HEK293 (cell line): ENCODE measurements at regions of chr9 and their contacts with region 1.

Region 1: DNA sequence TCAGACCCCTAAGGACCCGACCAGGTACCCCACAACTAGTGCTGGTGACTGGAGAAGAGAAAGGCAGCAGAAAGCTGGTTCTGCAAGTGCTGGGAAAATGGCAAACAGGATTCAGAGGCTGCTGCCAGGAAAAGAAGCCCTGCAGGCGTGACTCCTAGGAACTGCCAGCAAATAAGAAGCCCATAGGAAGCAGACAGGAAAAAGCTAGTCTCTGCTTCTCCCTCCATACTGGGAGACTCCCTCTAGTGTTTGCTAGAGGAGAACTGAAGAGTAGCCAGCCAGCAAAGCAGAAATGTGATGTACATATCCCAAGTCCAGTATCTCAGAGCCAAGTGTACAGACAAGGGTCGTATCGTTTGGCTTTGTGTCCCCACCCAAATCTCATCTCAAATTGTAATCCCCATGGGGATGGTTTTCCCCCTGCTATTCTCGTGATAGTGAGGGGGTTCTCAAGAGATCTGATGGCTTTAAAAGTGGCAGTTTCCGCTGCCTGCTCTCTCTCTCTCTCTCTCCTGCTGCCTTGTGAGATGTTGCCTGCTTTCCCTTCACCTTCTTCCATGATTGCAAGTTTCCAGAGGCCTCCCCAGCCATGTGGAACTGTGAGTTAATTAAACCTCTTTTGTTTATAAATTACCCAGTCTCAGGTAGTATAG is 38.1 kb upstream of the TUSC1 start:
- H3K4me3 ChIP-seq: no peak overlapping the region
- H3K27ac ChIP-seq: no peak overlapping the region
- H3K4me1 ChIP-seq: no peaks in the 10 kb centered on the region
- CTCF ChIP-seq: no peak

Region 2: GRCh38 chr9:25513509-25514033 is 202.8 kb before region 1 on chr9:
- CTCF ChIA-PET with region 1: no interaction called
- POLR2A ChIA-PET with region 1: no interaction called
- H3K4me3 ChIP-seq: no peak overlapping the region
- H3K27ac ChIP-seq: no peak overlapping the region
- H3K4me1 ChIP-seq: no peaks in the 10 kb centered on the region
- CTCF ChIP-seq: no peak

Region 3: GRCh38 chr9:25726871-25727410 is 10.6 kb after region 1 on chr9:
- CTCF ChIA-PET with region 1: interaction called, 10 read pairs
- POLR2A ChIA-PET with region 1: no interaction called
- H3K4me3 ChIP-seq: no peak overlapping the region
- H3K27ac ChIP-seq: no peak overlapping the region
- H3K4me1 ChIP-seq: no peaks in the 10 kb centered on the region
- CTCF ChIP-seq: no peak